ENCODE measurements at regions of chr10 and their contacts with region 1.

Region 1: GRCh38 chr10:69061305-69062161 is 26.4 kb upstream of the SRGN start:
- DNase-seq: peak; percentile 53 to 86
- H3K4me3 ChIP-seq: peak overlapping the region; percentile 27 to 49
- H3K27ac ChIP-seq: peak overlapping the region; percentile 87 to 96
- H3K4me1 ChIP-seq: peaks cover 10 to 19% of the 10 kb centered on the region in 2 donors
- H3K27me3 ChIP-seq: no peaks in the 10 kb centered on the region
- CTCF ChIP-seq: no peak

Region 2: DNA sequence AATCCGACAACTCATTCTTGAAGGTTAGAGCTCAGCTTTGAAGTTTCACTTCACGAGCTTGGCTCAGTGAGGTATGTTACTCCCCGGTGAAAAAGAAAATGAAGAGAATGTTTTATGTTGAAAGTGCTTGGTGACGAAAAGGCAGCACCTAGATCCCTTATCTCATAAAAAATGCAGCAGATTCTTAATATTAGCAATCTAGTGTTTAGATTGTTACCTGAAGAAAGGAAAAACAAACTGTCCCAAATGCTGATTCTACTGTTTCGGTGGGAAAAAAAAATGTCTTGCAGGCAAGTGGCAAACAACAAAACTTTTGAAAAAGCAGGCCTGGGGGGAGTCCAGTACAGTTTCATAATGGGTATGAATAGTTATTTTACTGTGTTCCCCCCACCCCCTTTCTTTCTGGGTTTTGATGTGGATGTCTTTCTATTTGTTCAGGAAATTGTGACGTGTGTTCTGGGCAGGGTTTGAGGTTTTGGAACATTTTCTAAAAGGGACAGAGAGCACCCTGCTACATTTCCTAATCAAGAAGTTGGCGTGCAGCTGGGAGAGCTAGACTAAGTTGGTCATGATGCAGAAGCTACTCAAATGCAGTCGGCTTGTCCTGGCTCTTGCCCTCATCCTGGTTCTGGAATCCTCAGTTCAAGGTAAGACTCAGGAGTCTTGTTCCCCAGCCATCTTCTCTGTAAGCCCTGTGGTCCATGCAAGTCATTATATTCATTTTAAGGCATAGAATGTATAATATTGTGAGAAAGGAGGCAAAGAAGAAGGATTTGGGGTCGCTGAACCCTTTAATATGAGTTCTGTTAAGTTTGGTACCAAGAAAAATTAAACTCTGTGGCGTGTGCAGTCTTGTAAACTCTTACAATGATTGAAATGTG is 26.3 kb after region 1 on chr10 and contains the start of gene SRGN:
- intact Hi-C with region 1: loop called (anchors 1 kb)
- DNase-seq: peak; percentile 71 to 95
- H3K4me3 ChIP-seq: peak within 1 kb of the TSS; percentile 46 to 65
- H3K27ac ChIP-seq: peak within 1 kb of the TSS; percentile 82 to 83
- H3K4me1 ChIP-seq: peaks cover 7% of the 10 kb centered on the region in 2 donors
- H3K27me3 ChIP-seq: no peaks in the 10 kb centered on the region
- CTCF ChIP-seq: no peak
- total RNA-seq, gene SRGN: 155 TPM